Endothelial cell of umbilical vein (primary cell): ENCODE measurements at regions of chr1 and their contacts with region 1.

Region 1: DNA sequence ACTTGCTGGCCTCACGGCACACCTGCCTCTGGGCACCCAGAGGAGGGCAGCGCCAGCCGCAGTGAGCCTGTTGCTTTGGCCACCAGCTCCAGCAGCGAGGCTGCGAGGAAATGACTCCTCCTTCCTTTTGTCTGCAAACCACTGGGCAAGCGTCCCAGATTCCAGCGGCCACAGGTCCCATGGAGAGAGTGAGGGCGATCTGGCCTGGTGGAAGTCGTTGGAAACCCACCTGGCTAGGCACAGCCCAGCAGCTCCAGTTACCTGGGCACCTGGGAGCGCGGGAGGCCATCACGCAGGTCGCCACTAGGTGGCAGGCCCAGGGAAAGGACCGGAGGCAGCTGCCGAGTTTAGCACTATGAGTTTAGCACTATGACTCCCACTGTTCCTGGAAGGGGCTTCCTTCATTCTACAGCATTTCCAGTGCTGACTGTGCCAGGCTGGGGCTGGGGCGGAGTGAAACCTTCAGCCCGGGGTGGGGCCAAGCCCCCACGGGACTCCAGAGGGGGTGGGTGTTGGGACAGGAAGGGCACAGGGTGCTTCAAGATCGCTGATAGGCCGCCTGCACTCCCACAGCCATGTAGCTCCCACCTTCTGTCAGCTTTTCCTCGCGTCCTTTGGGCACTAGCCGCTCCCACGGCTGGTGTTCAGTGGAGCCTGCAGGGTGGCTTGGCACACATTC is 1.1 kb upstream of the ESPN start:
- DNase-seq: peak; percentile 75
- H3K4me3 ChIP-seq: peak overlapping the region in 1 of 3 experiments; percentile 9
- H3K27ac ChIP-seq: peak overlapping the region; percentile 83
- H3K4me1 ChIP-seq: peaks cover 35% of the 10 kb centered on the region
- H3K27me3 ChIP-seq: peaks cover 0 to 7% of the 10 kb centered on the region in 2 experiments
- CTCF ChIP-seq: peak; percentile 49 to 73
- POLR2A ChIP-seq: peak; percentile 31

Region 2: GRCh38 chr1:6235296-6235677 is 188.2 kb before region 1 on chr1:
- CTCF ChIA-PET with region 1: no interaction called
- POLR2A ChIA-PET with region 1: no interaction called
- dilution Hi-C with region 1: no loop called
- intact Hi-C with region 1: loop called (anchors 5 kb)
- DNase-seq: no peak
- H3K4me3 ChIP-seq: peak overlapping the region; percentile 66 to 80 (median 68)
- H3K27ac ChIP-seq: peak overlapping the region; percentile 6
- H3K4me1 ChIP-seq: peaks cover 11% of the 10 kb centered on the region
- H3K27me3 ChIP-seq: peaks cover 8 to 9% of the 10 kb centered on the region in 2 experiments
- CTCF ChIP-seq: no peak
- POLR2A ChIP-seq: no peak

Region 3: GRCh38 chr1:6259491-6260425 is 163.7 kb before region 1 on chr1:
- CTCF ChIA-PET with region 1: interaction called, 3 read pairs
- POLR2A ChIA-PET with region 1: no interaction called
- dilution Hi-C with region 1: no loop called
- intact Hi-C with region 1: loop called (anchors 5 kb)
- DNase-seq: peak; percentile 64
- H3K4me3 ChIP-seq: peak overlapping the region in 2 of 3 experiments; percentile 34 to 55
- H3K27ac ChIP-seq: no peak overlapping the region
- H3K4me1 ChIP-seq: no peaks in the 10 kb centered on the region
- H3K27me3 ChIP-seq: no peaks in the 10 kb centered on the region
- CTCF ChIP-seq: no peak
- POLR2A ChIP-seq: no peak